ENCODE measurements at regions of chr6 and their contacts with region 1.

Region 1: DNA sequence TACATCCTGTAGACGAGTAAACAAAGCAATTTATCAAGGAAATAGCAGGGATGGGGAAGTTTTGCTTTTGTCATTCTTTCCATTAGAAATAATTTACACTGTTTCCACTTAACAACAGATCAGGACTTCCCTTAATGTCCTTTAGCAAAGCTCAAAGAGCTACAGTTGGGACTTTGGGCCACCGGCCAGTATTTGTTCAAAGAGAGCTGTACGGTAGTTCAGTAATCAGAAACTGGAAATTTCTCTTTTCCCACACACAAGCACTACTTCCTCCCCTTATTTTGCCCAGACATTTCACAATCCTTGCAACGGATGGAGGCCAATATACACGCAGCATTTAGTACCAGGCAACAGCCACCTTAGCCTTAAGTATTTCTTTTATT is 12.1 kb upstream of the HINT3 start:
- DNase-seq: no peak
- H3K4me3 Mint-ChIP-seq: no peak overlapping the region
- H3K27ac Mint-ChIP-seq: no peak overlapping the region
- H3K4me1 Mint-ChIP-seq: peaks cover 22% of the 10 kb centered on the region
- H3K27me3 Mint-ChIP-seq: peaks cover 6% of the 10 kb centered on the region

Region 2: DNA sequence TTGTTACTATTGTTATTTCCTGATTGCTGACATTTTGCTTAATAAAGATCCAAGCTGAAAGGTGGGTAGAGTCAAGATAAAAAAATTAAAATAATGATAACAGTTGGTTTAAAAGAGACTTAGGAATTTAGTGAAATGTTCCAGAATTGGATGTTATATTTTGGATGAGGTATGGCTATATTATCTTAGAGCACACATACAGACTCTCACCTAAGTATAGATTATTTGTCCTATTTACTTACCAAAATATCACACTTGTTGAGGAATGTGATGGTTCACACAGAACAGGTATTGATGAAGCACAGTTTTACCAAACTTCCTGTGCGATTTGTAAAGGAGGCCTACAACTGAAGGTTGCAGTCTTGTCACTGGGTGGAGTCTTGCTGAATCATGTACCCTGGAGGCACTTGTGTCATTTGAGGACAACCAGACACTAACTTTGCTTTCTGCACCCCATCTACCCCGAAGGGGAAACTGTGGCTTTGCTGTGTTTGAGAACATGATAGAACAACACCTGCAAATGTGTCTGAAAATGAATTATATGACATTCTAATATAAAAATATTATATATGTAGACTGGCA is 20.3 kb before region 1 on chr6:
- intact Hi-C with region 1: loop called (anchors 2 kb)
- DNase-seq: peak; percentile 75
- H3K4me3 Mint-ChIP-seq: peak overlapping the region; percentile 44
- H3K27ac Mint-ChIP-seq: peak overlapping the region; percentile 66
- H3K4me1 Mint-ChIP-seq: peaks cover 50% of the 10 kb centered on the region
- H3K27me3 Mint-ChIP-seq: no peaks in the 10 kb centered on the region

Measured in activated CD4-positive, alpha-beta T cell treated with anti-CD3 and anti-CD28 coated beads, Interleukin-2, amount 10 ng/mL, durations not matched to agents 24 days and 14 days (primary cell).